Dorsolateral prefrontal cortex (tissue), 120 donors: ENCODE measurements at regions of chr19 and their contacts with region 1.

Region 1: GRCh38 chr19:43595999-43596841 is at the starts of genes IRGQ and ZNF576:
- DNase-seq: peak; percentile 98 to 100 (median 99)
- H3K4me3 ChIP-seq: peak within 1 kb of the TSS; percentile 56 to 94 (median 80)
- H3K27ac ChIP-seq: peak within 1 kb of the TSS; percentile 88 to 100 (median 98)
- H3K27me3 ChIP-seq: no peaks in the 10 kb centered on the region
- CTCF ChIP-seq: peak in 34 of 56 donors; percentile 6 to 48 (median 28)
- total RNA-seq, gene IRGQ: 32.4 to 75.1 (median 53.9) TPM
- total RNA-seq, gene ZNF576: 12.5 to 30.4 (median 22.2) TPM

Region 2: GRCh38 chr19:43501661-43502418 is 94.4 kb before region 1 on chr19:
- intact Hi-C with region 1: no loop called
- DNase-seq: no peak
- H3K4me3 ChIP-seq: peak overlapping the region in 35 of 59 donors; percentile 0 to 92 (median 20)
- H3K27ac ChIP-seq: peak overlapping the region in 3 of 59 donors; percentile 14 to 38 (median 20)
- H3K27me3 ChIP-seq: no peaks in the 10 kb centered on the region
- CTCF ChIP-seq: no peak

Region 3: GRCh38 chr19:43532962-43533545 is 63.2 kb before region 1 on chr19 and contains the start of gene ZNF575:
- intact Hi-C with region 1: loop called (anchors 2 to 5 kb)
- DNase-seq: peak; percentile 86 to 96 (median 92)
- H3K4me3 ChIP-seq: peak within 1 kb of the TSS; percentile 51 to 86 (median 75)
- H3K27ac ChIP-seq: peak within 1 kb of the TSS; percentile 58 to 99 (median 96)
- H3K27me3 ChIP-seq: no peaks in the 10 kb centered on the region
- CTCF ChIP-seq: peak in 22 of 56 donors; percentile 11 to 49 (median 27)
- total RNA-seq, gene ZNF575: 4.4 to 14.3 (median 8.2) TPM

Region 4: GRCh38 chr19:43575156-43575950 is 20.9 kb before region 1 on chr19 and contains the starts of genes PINLYP and XRCC1:
- intact Hi-C with region 1: loop called (anchors 1 kb)
- DNase-seq: peak; percentile 88 to 98 (median 98)
- H3K4me3 ChIP-seq: peak within 1 kb of the TSS; percentile 56 to 99 (median 88)
- H3K27ac ChIP-seq: peak within 1 kb of the TSS in 57 of 59 donors; percentile 30 to 96 (median 83)
- H3K27me3 ChIP-seq: no peaks in the 10 kb centered on the region
- CTCF ChIP-seq: peak in 15 of 56 donors; percentile 8 to 38 (median 22)
- total RNA-seq, gene PINLYP: 0.93 to 18.3 (median 5.7) TPM
- total RNA-seq, gene XRCC1: 15.0 to 45.0 (median 30.4) TPM

Region 5: GRCh38 chr19:43619262-43620060 is 23.2 kb after region 1 on chr19 and contains the start of gene ZNF428:
- intact Hi-C with region 1: loop called in 1 of 2 experiments (anchors 1 kb)
- DNase-seq: peak; percentile 88 to 96 (median 94)
- H3K4me3 ChIP-seq: peak within 1 kb of the TSS; percentile 52 to 96 (median 81)
- H3K27ac ChIP-seq: peak within 1 kb of the TSS; percentile 87 to 100 (median 98)
- H3K27me3 ChIP-seq: no peaks in the 10 kb centered on the region
- CTCF ChIP-seq: peak in 32 of 56 donors; percentile 2 to 55 (median 28)
- total RNA-seq, gene ZNF428: 58.0 to 110 (median 83.3) TPM

Region 6: GRCh38 chr19:43639519-43640423 is 43.6 kb after region 1 on chr19 and contains the start of gene CADM4:
- intact Hi-C with region 1: loop called (anchors 1 to 2 kb)
- DNase-seq: peak in 4 of 10 donors; percentile 60 to 73 (median 66)
- H3K4me3 ChIP-seq: peak within 1 kb of the TSS; percentile 36 to 79 (median 66)
- H3K27ac ChIP-seq: peak within 1 kb of the TSS; percentile 51 to 100 (median 98)
- H3K27me3 ChIP-seq: no peaks in the 10 kb centered on the region
- CTCF ChIP-seq: no peak
- total RNA-seq, gene CADM4: 79.5 to 239 (median 123) TPM

Region 7: DNA sequence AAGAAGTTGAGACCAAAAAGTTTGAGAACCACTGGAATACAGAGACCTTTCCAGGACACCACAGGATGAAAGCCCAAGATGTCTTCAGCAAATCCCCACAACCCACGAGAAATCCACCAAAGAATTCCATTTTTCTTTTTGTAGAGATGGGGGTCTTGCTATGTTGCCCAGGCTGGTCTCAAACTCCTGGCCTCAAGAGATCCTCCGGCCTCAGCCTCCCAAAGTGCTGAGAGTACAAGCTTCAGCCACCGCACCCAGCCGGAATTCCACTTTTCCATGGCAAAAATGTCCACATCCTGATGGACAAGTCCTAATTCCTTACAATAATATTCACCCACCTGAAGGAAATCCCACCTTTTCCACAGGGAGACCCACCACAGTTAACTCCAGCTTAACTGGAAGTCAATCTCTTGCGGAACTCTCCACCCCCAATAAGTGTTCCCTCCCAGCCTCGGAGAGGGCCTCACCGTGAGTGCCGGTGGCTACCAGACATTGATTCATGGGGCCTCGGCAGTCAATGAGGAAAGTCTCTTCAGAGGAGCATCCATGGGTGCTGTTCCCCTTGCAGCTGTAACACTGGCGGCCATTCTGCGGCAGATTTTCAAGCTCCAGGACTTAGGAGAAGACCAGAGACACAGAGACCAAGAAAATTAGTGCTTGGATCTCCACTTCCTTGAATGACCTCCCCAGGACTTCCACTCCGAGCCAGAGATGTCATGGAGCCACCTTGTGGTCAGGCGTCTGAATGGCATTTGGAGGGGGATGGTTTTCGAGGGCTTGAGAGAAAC is 55.7 kb after region 1 on chr19:
- intact Hi-C with region 1: loop called (anchors 2 to 5 kb)
- DNase-seq: peak; percentile 54 to 80 (median 70)
- H3K4me3 ChIP-seq: peak overlapping the region in 52 of 59 donors; percentile 2 to 58 (median 34)
- H3K27ac ChIP-seq: peak overlapping the region in 40 of 59 donors; percentile 3 to 77 (median 51)
- H3K27me3 ChIP-seq: no peaks in the 10 kb centered on the region
- CTCF ChIP-seq: peak; percentile 64 to 92 (median 85)

Region 8: GRCh38 chr19:43711751-43712355 is 115.6 kb after region 1 on chr19:
- intact Hi-C with region 1: no loop called
- DNase-seq: no peak
- H3K4me3 ChIP-seq: no peak overlapping the region
- H3K27ac ChIP-seq: no peak overlapping the region
- H3K27me3 ChIP-seq: no peaks in the 10 kb centered on the region
- CTCF ChIP-seq: no peak

Region 9: DNA sequence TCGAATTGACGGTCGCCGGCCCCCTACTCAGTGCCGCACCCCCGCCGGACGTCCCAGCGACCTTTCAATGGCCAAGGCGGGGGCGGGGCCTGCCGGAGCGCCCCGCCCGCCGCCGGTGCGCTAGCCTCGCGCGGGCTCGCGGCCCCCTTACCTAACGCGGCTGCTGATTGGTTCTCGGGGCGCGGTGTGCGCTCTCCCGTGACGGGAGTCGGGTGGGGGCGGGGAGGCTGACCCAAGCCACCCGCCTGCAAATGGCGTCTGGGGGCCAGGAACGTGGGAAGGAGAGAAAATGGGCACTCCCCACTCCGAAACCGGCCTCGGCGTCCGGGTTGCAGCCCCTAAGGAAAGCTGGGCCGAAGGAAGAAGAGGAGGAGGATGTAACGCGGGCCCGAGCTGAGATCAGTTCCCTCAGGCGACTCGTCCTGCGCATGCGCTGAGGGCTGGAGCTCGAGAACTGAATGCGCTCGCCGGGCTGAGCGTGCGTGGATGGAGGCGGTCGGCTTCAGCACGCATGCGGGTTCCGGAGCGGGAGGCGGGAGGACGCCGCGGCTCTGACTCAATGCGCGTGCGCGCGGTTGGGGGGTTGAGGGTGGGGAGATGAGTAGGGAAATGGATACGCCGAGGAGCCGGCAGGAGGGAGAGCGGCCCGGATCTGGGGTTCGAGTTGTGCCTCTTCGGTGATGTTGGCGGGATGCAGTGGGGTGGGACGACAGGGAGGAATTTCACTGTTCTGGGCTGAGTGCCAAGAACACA is 158.5 kb after region 1 on chr19 and contains the start of gene SMG9:
- intact Hi-C with region 1: loop called in 1 of 2 experiments (anchors 10 kb)
- DNase-seq: peak; percentile 89 to 98 (median 95)
- H3K4me3 ChIP-seq: peak within 1 kb of the TSS; percentile 61 to 98 (median 85)
- H3K27ac ChIP-seq: peak within 1 kb of the TSS; percentile 86 to 100 (median 99)
- H3K27me3 ChIP-seq: no peaks in the 10 kb centered on the region
- CTCF ChIP-seq: peak in 12 of 56 donors; percentile 2 to 33 (median 14)
- total RNA-seq, gene SMG9: 48.9 to 130 (median 77.0) TPM

Region 10: GRCh38 chr19:44025217-44025936 is 429.2 kb after region 1 on chr19 and contains the start of gene ZNF222:
- intact Hi-C with region 1: no loop called
- DNase-seq: peak; percentile 70 to 95 (median 88)
- H3K4me3 ChIP-seq: peak within 1 kb of the TSS; percentile 62 to 98 (median 87)
- H3K27ac ChIP-seq: peak within 1 kb of the TSS in 35 of 59 donors; percentile 6 to 84 (median 51)
- H3K27me3 ChIP-seq: peaks cover 0 to 6% (median 0%) of the 10 kb centered on the region in 45 donors
- CTCF ChIP-seq: peak in 8 of 56 donors; percentile 8 to 27 (median 16)
- total RNA-seq, gene ZNF222: 2.5 to 10.7 (median 7.0) TPM